Sigmoid colon (tissue), 7 donors: ENCODE measurements at regions of chr6 and their contacts with region 1.

Region 1: DNA sequence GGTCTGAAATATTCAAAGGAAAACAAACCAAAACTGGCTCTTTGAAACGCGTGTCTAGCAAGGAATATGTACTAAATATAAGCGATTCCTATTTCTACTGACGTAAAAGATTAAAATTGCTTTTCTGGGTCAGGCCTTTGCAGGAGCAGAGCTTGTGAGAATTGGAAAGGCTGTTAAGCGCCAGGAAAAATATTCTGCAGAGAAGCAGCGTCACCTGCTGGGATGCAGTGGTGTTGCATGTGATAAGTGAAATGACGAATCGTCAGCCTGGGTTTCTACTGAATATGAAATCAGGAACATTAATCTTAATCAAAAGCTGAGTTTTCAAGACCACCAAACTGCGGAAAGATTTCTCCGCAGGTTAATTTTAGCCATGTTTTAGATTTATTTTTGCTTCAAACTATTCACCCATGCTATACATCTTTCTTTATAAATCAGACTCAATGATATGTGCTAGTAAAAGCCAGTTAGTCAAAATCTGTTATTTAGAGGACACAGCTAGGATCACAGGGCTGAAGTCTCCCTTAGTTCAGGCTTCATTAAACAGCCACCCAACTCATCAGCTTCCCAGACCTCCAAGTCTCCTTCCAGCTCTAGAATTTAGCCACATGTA is 67.4 kb downstream of the ALDH8A1 start:
- DNase-seq: peak; percentile 78
- H3K4me3 ChIP-seq: no peak overlapping the region
- H3K27ac ChIP-seq: no peak overlapping the region
- H3K4me1 ChIP-seq: no peaks in the 10 kb centered on the region
- H3K27me3 ChIP-seq: peaks cover 0 to 12% (median 0%) of the 10 kb centered on the region in 3 donors
- CTCF ChIP-seq: peak; percentile 46 to 90 (median 87)
- EP300 ChIP-seq: no peak
- POLR2A ChIP-seq: no peak

Region 2: GRCh38 chr6:134161036-134161435 is 721.5 kb before region 1 on chr6:
- intact Hi-C with region 1: loop called (anchors 5 kb)
- DNase-seq: no peak
- H3K4me3 ChIP-seq: no peak overlapping the region
- H3K27ac ChIP-seq: no peak overlapping the region
- H3K4me1 ChIP-seq: no peaks in the 10 kb centered on the region
- H3K27me3 ChIP-seq: no peaks in the 10 kb centered on the region
- CTCF ChIP-seq: no peak
- EP300 ChIP-seq: no peak
- POLR2A ChIP-seq: no peak

Region 3: GRCh38 chr6:135774006-135774405 is 891.5 kb after region 1 on chr6:
- intact Hi-C with region 1: no loop called
- DNase-seq: no peak
- H3K4me3 ChIP-seq: no peak overlapping the region
- H3K27ac ChIP-seq: no peak overlapping the region
- H3K4me1 ChIP-seq: no peaks in the 10 kb centered on the region
- H3K27me3 ChIP-seq: no peaks in the 10 kb centered on the region
- CTCF ChIP-seq: no peak
- EP300 ChIP-seq: no peak
- POLR2A ChIP-seq: no peak